ENCODE measurements at regions of chrX and their contacts with region 1.

Region 1: GRCh38 chrX:23503835-23504542 is 163.3 kb upstream of the PRDX4 start:
- DNase-seq: peak; percentile 84 to 91
- ATAC-seq: peak; percentile 78
- H3K4me3 ChIP-seq: no peak overlapping the region
- H3K27ac ChIP-seq: peak overlapping the region in 1 of 2 donors; percentile 61
- H3K4me1 ChIP-seq: no peaks in the 10 kb centered on the region
- H3K27me3 ChIP-seq: no peaks in the 10 kb centered on the region

Region 2: DNA sequence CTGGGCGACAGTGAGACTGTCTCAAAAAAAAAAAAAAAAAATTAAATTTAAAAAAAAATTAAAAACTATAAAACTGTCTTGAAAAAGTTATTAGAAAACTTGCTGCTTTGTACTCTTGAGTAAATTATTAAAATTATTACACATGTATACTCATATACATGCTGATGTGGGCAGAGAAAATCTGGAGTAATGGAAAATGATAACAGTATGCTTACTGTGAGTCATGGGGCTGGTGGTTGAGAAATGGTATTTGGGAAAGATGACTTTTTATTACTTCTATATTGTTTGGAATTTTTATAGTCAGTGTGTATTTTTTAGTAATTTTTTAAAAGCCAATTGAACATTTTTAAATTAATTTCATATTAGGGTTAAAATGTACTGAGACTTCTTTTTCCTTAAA is 1640.7 kb before region 1 on chrX:
- intact Hi-C with region 1: loop called in 1 of 2 experiments (anchors 10 kb)
- DNase-seq: no peak
- ATAC-seq: no peak
- H3K4me3 ChIP-seq: no peak overlapping the region
- H3K27ac ChIP-seq: no peak overlapping the region
- H3K4me1 ChIP-seq: peaks cover 0 to under 1% of the 10 kb centered on the region in 2 donors
- H3K27me3 ChIP-seq: no peaks in the 10 kb centered on the region